HEK293T (cell line): ENCODE measurements at regions of chrX and their contacts with region 1.

Region 1: DNA sequence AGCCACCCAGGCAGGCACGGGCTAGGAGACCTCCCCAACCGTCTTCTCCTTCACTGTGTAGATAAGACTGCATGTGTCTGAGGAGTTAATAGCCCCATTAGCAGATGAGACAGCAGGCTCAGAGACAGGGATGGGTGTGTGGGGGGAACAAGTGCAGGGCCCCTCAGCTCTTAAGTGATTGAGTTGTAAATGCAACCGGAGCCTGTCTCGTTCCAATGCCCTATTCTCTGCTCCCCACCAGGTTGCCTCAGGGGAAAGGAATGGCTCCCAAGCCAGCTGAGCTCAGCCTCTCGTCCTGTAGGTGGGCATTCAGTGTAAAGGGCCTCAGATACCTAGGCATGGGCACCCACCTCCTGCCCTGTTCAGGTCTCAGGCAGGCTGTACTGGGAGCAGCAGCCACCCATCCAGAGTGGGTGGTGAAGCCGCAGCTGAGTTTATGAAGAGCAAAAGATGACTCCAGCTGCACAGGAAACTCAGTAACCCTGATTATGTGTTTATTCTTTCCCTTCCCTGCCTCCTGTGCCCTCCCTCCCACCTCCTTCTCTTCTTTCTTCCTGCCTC is 87.3 kb downstream of the PJA1 start:
- DNase-seq: no peak

Region 2: DNA sequence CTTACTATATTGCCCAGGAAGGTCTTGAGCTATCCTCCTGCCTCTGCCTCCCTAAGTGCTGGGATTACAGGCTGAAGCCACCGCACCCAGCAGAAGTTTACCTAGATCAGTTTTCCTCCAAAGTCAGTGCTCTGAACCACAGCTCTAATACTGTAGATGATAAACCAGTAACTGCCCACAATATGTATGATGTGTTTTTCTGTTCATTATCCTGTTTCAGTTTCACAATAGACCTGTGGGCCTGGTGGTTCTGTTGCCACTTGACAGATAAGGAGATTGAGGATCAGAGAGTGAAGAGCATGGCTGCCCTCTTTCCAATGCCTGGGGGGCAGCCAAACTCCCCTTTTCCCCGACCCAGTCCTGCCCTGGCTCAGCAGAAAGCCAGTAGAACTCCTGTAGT is 162.2 kb before region 1 on chrX:
- CTCF ChIA-PET with region 1: no interaction called
- POLR2A ChIA-PET with region 1: no interaction called
- DNase-seq: no peak

Region 3: GRCh38 chrX:69045616-69046345 is 32.2 kb before region 1 on chrX:
- CTCF ChIA-PET with region 1: no interaction called
- POLR2A ChIA-PET with region 1: no interaction called
- DNase-seq: no peak

Region 4: DNA sequence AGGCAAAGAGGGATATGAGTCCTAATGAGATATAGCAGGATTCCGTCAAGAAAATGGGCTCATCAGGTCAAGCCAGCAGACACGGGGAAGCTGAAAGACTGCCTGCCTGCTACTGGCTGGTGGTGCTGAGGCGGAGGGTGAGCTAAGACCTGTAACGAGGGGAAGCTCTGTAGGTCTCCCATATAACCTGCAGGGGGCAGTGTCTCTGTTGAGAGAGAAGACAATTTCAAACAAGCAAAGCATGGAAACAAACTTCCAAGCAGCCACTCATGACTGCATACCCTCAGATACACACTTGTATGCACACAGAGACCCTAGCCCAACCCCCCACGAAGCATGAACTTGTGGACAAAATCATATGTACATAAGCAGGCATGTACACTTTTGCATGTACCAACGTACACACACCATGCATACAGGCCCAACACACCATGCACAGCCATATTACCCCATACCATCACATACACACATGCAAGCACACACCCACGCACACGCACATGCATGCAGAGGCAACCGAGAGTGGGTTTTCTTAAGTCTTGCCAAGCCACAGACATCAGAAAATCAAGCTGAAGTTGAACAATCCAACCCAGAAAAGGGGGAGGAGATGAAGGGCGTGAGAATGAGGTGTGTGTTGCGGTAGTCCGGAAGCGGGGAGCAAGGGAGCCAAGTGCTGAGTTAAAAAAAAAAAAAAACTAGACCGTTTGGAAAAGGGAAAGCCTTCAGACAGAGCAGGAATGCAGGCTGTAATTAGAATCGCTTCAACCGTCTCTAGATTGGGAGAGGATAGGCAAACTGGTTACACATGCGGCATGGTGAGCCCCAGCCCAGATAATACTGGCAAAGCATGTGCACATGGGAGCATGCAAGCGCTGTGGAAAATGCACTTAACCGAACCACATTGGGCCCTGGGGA is 16.2 kb after region 1 on chrX:
- CTCF ChIA-PET with region 1: interaction called, 10 read pairs
- POLR2A ChIA-PET with region 1: interaction called, 12 read pairs
- DNase-seq: peak; percentile 79

Region 5: GRCh38 chrX:69102612-69103194 is 24.7 kb after region 1 on chrX:
- CTCF ChIA-PET with region 1: no interaction called
- POLR2A ChIA-PET with region 1: interaction called, 56 read pairs
- DNase-seq: no peak

Region 6: DNA sequence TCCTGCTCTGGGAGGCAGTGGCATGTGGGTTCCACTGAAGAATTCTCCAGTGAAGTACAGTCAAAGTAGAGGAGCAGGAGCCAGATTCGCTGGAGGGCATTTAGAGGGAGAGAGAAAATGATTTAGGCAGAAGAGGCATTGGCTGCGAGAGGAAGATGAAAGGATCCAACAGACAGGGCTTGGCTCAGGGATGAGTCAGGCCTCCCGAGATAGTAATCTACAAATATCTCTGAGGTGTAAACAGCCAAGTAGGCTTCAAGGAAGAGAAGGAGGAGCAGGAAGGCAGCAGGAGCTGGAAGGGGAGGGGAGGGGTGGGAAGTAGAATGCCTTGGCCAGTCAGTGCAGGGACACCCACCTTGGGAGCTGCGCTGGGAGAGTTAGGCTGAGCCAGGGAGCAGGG is 31.7 kb after region 1 on chrX:
- CTCF ChIA-PET with region 1: no interaction called
- POLR2A ChIA-PET with region 1: interaction called, 56 read pairs
- DNase-seq: no peak

Region 7: DNA sequence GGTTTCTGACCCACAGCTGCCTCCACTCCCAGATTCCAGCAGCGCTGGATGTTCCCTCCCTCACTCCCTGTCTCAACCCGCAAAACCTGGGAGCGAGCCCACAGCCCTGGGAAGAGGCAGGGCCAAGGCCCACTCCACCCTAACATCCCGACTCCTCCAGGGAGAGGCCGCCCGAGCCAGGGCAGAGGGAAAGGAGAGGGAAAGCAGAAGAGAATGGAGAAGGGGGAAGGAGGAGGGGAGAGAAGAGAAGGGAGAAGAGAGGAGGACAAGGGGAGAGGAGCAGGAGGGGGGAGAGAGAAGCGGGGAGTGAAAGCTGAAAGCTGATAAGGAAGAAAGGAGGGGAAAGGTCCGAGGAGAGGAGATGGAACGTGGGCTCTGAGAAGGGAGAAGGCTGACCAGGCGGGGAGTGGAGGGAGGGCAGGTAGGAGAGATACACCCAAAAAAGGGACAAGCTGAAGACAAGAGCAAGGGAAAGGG is 207.5 kb after region 1 on chrX:
- CTCF ChIA-PET with region 1: interaction called, 10 read pairs
- POLR2A ChIA-PET with region 1: interaction called, 7 read pairs
- DNase-seq: no peak